ENCODE measurements at regions of chr19 and their contacts with region 1.

Region 1: GRCh38 chr19:18203863-18204393 is at the start of gene RAB3A:
- DNase-seq: peak; percentile 99
- H3K4me3 Mint-ChIP-seq: peak within 1 kb of the TSS; percentile 95
- H3K27ac Mint-ChIP-seq: peak within 1 kb of the TSS; percentile 86
- H3K4me1 Mint-ChIP-seq: peaks cover 18% of the 10 kb centered on the region
- H3K27me3 Mint-ChIP-seq: peaks cover 4% of the 10 kb centered on the region
- total RNA-seq, gene RAB3A: 7.2 and 11.0 TPM in 2 replicates

Region 2: DNA sequence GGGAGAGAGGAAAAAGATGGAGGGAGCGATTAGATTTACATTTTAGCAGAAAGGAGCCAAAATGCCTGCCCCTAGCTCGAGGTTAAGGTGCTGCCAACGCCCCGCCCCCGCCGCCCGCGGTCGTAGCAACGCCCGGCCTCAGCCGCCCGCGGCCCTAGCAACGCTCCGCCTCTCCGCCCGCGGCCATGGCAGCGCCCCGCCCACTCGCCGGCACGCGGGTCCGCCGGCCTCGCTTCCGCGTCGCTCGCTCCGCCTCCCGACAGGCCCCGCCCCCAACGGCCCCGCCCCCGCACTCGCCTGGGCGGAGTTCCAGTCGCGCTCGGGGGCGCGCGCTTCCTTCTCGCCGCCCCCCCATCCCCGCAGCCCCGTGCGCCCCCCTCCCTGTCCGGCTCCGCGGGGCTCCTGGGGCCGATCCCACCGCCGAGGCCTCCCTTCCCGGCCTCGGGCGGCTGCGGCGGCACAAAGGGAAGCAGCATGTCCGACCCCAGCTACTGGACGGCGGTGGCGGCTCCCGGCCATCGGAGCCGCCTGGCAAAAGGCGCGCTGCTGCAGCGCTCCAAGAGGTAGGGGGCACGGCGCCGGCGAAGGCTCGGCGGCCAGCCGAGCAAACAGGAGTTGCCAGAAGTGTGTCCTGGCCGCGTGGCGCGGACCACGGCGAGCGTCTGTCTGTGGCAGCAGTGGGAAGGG is 86.1 kb before region 1 on chr19:
- intact Hi-C with region 1: loop called (anchors 1 kb)
- DNase-seq: peak; percentile 95
- H3K4me3 Mint-ChIP-seq: peak overlapping the region; percentile 84
- H3K27ac Mint-ChIP-seq: peak overlapping the region; percentile 93
- H3K4me1 Mint-ChIP-seq: peaks cover 31% of the 10 kb centered on the region
- H3K27me3 Mint-ChIP-seq: no peaks in the 10 kb centered on the region

Region 3: GRCh38 chr19:18192673-18193387 is 11.1 kb before region 1 on chr19 and contains the start of gene MPV17L2:
- intact Hi-C with region 1: loop called (anchors 1 kb)
- DNase-seq: peak; percentile 99
- H3K4me3 Mint-ChIP-seq: peak within 1 kb of the TSS; percentile 83
- H3K27ac Mint-ChIP-seq: peak within 1 kb of the TSS; percentile 90
- H3K4me1 Mint-ChIP-seq: peaks cover 20% of the 10 kb centered on the region
- H3K27me3 Mint-ChIP-seq: no peaks in the 10 kb centered on the region
- total RNA-seq, gene MPV17L2: 19.2 and 23.3 TPM in 2 replicates

Region 4: DNA sequence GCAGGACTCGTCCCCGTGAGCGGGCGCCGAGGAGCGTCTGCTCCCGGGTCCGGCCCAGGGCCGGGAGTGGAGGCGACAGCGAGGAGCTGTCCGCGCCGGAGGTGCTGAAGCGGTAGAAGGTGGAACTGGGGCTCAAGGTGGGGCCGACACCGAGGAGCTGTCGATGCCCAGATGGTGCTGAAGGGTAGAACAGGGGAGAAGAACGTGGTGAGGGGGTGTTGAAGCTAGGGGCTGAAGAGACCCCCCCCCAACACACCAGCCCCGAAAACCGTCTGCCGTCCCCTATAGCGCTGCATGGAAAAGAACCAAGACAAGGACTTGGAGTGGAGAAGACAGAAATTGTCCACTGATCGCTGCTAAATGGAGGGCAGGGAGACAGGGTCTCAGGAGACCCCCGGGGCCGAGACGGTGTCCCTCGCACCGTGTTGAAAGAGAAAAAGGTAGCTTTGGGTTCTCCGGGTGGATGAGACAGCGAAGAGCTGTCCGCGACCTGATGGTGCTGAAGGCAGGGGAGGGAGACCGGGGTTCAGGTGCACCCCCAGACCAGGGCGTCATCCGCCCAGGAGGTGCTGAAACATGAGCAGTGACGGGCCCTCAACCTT is 29.4 kb after region 1 on chr19:
- intact Hi-C with region 1: no loop called
- DNase-seq: peak; percentile 48
- H3K4me3 Mint-ChIP-seq: no peak overlapping the region
- H3K27ac Mint-ChIP-seq: no peak overlapping the region
- H3K4me1 Mint-ChIP-seq: peaks cover 9% of the 10 kb centered on the region
- H3K27me3 Mint-ChIP-seq: peaks cover 44% of the 10 kb centered on the region

Region 5: GRCh38 chr19:18251587-18252369 is 47.9 kb after region 1 on chr19:
- intact Hi-C with region 1: loop called (anchors 1 kb)
- DNase-seq: peak; percentile 66
- H3K4me3 Mint-ChIP-seq: no peak overlapping the region
- H3K27ac Mint-ChIP-seq: peak overlapping the region; percentile 18
- H3K4me1 Mint-ChIP-seq: no peaks in the 10 kb centered on the region
- H3K27me3 Mint-ChIP-seq: peaks cover 16% of the 10 kb centered on the region

Region 6: GRCh38 chr19:18322759-18323460 is 119.0 kb after region 1 on chr19 and contains the start of gene LSM4:
- intact Hi-C with region 1: loop called (anchors 1 kb)
- DNase-seq: peak; percentile 99
- H3K4me3 Mint-ChIP-seq: peak within 1 kb of the TSS; percentile 95
- H3K27ac Mint-ChIP-seq: peak within 1 kb of the TSS; percentile 93
- H3K4me1 Mint-ChIP-seq: peaks cover 53% of the 10 kb centered on the region
- H3K27me3 Mint-ChIP-seq: no peaks in the 10 kb centered on the region
- total RNA-seq, gene LSM4: 198 and 200 TPM in 2 replicates

Region 7: GRCh38 chr19:18340190-18340989 is 136.5 kb after region 1 on chr19 and contains the start of gene PGPEP1:
- intact Hi-C with region 1: loop called (anchors 1 kb)
- DNase-seq: peak; percentile 62
- H3K4me3 Mint-ChIP-seq: peak within 1 kb of the TSS; percentile 90
- H3K27ac Mint-ChIP-seq: peak within 1 kb of the TSS; percentile 86
- H3K4me1 Mint-ChIP-seq: peaks cover 11% of the 10 kb centered on the region
- H3K27me3 Mint-ChIP-seq: peaks cover 2% of the 10 kb centered on the region
- total RNA-seq, gene PGPEP1: 17.9 and 21.5 TPM in 2 replicates

Region 8: DNA sequence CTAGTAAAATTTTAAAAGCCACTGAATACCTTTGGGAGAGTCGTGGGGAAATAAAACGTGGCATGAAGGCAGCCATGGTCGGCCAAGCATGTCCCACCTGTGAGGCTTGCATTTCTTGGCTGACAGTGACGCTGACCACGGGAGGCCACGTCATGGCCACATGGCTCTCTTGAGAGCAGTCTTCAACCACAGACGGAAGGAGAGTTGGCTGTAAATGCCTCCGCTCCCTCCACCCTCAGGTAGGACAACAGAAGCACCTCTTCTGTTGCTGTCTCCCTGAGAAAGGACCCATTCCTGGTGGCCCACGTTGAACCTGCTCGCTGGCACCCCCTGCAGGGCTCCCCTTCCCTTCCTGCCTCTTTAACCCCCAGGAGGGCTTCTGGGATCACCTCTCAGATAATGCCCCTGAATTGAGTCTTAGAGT is 204.1 kb after region 1 on chr19:
- intact Hi-C with region 1: loop called (anchors 1 kb)
- DNase-seq: no peak
- H3K4me3 Mint-ChIP-seq: no peak overlapping the region
- H3K27ac Mint-ChIP-seq: no peak overlapping the region
- H3K4me1 Mint-ChIP-seq: peaks cover 4% of the 10 kb centered on the region
- H3K27me3 Mint-ChIP-seq: peaks cover 10% of the 10 kb centered on the region

Measured in activated T-helper 1 cell treated with anti-CD3 and anti-CD28 coated beads, Interleukin-12 subunit alpha, Interleukin-12 subunit beta, Interleukin-2, Interleukin-4 antibody, amounts not matched to agents 30 ng/mL and 10 ng/mL and 1 ng/mL, durations not matched to agents 14 hours and 24 hours and 36 hours (primary cell).